ENCODE measurements at regions of chr3 and their contacts with region 1.

Region 1: DNA sequence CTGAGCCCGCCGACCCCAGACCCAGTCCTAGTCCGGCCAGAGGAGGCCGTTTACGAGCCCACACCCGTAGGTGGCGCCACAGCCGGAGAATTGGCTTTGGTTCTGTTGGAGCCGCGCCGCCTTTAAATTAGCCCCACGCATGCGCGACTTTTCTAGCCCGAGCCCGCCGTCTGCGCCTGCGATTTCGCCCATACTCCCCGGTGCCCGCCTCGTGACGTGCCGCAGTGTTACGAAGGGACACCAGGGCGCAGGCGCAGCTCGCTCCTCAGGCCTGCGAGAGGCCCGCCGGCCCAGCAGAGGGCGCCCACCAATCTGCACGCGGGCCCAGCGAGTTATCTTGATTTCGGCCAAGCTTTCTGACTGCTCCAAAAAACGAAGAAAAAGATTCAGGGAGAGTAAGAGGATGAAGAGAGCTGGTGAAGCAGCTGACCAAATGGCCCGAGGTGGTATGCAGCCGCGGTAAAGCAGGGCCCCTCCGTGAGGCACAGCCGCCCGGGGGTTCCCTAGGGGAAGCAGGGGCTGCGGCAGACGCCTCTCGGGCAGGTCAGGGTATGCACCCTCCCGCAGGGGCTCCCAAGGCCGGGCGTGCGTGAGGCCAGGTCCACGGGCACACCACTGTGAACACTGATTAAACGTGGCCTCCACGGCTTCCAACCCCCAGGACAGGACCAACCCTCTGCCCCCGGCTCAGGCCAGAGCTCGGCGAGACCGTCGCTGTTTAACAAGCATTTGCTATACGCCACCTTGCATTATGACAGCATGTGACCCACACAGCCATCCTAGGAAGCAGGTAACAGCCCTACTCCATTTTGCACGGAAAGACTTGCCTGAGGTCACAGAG is 32.8 kb downstream of the RPN1 start:
- DNase-seq: peak; percentile 99
- ATAC-seq: peak; percentile 93
- H3K4me3 Mint-ChIP-seq: peak overlapping the region; percentile 99
- H3K27ac Mint-ChIP-seq: peak overlapping the region; percentile 95
- H3K4me1 Mint-ChIP-seq: peaks cover 46% of the 10 kb centered on the region
- H3K27me3 Mint-ChIP-seq: no peaks in the 10 kb centered on the region

Region 2: DNA sequence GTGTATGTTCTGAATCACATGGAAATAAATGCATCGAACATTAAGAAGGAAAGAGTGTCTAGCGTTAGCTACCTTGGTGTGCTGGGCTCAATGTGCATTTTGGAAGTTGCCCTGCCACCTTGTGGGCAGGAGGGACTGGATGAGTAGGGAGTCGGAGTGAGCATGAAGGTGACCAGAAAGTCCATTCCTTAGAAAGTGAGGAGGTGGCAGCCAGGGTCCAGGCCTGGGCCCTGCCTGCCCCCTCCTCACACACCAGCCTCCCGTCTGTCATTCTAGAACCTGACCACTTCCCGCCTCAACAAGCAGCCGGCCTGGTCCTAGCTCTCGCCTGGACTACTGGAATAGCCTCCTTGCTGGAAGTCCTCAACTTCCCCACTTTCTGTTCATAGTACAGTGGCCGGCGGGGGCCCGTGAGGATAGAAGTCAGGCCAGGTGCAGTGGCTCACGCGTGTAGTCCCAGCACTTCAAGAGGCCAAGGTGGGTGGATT is 114.6 kb before region 1 on chr3:
- CTCF ChIA-PET with region 1: no interaction called
- DNase-seq: peak; percentile 30
- ATAC-seq: no peak
- H3K4me3 Mint-ChIP-seq: no peak overlapping the region
- H3K27ac Mint-ChIP-seq: no peak overlapping the region
- H3K4me1 Mint-ChIP-seq: no peaks in the 10 kb centered on the region
- H3K27me3 Mint-ChIP-seq: peaks cover 34% of the 10 kb centered on the region

Region 3: DNA sequence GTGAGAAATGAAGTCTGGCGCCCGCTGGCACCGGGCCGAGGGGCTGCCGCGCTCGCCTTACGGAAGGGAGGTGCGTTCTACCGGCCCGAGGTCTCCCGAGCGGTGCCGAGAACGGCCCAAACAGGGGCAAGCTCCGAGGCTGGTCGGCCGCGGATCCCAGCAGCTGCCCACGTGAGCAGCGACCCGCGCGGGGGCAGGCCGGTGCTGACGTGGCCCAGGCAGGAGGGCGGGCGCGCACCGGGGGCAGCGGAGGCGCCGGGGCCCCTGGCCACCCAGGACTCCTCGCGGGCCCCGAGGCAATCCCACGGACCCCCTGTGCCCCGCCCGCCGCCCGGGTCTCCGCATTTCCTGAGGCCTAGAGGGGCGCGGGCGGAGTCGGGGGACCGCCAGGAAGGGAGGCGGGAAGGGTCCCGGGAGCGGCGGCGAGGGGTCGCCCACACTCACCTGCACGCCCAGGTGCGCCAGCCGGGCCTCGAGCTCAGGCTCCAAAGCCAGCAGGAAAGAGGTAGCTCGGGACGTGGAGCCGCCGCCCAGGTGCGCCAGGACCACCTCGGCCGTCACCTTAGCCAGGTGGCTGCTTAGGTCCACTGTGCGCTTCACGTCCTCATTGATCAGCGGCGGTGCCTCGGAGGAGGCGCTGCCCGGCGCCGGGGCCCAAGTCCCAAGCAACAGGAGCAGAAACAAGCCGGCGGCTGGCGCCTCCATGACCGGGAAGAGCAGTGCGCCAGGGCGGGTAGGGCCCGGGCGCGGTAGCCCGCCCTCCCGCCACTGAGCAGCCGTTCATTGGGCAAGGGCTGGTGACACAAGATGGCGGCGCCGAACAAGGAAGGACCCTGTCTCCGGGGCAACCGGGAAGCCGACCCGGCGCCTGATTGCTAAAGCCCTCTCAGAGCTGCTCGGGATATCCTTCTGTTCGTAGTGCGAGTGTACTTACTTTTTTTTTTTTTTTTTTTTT is 32.6 kb after region 1 on chr3 and contains the start of gene RPN1:
- CTCF ChIA-PET with region 1: interaction called, 27 read pairs
- DNase-seq: peak; percentile 97
- ATAC-seq: peak; percentile 98
- H3K4me3 Mint-ChIP-seq: peak within 1 kb of the TSS; percentile 84
- H3K27ac Mint-ChIP-seq: peak within 1 kb of the TSS; percentile 85
- H3K4me1 Mint-ChIP-seq: peaks cover 47% of the 10 kb centered on the region
- H3K27me3 Mint-ChIP-seq: no peaks in the 10 kb centered on the region
- total RNA-seq, gene RPN1: 151 to 175 TPM

Region 4: GRCh38 chr3:128794770-128795649 is 177.2 kb after region 1 on chr3:
- CTCF ChIA-PET with region 1: interaction called, 13 read pairs
- DNase-seq: peak; percentile 80
- ATAC-seq: peak; percentile 89
- H3K4me3 Mint-ChIP-seq: no peak overlapping the region
- H3K27ac Mint-ChIP-seq: peak overlapping the region; percentile 74
- H3K4me1 Mint-ChIP-seq: peaks cover 69% of the 10 kb centered on the region
- H3K27me3 Mint-ChIP-seq: no peaks in the 10 kb centered on the region

Region 5: GRCh38 chr3:128845778-128846485 is 228.2 kb after region 1 on chr3:
- CTCF ChIA-PET with region 1: interaction called, 36 read pairs
- DNase-seq: peak; percentile 91
- ATAC-seq: peak; percentile 81
- H3K4me3 Mint-ChIP-seq: peak overlapping the region; percentile 59
- H3K27ac Mint-ChIP-seq: peak overlapping the region; percentile 80
- H3K4me1 Mint-ChIP-seq: peaks cover 13% of the 10 kb centered on the region
- H3K27me3 Mint-ChIP-seq: no peaks in the 10 kb centered on the region

Region 6: GRCh38 chr3:129183569-129184395 is 566.0 kb after region 1 on chr3 and contains the start of gene CNBP:
- CTCF ChIA-PET with region 1: no interaction called
- DNase-seq: peak; percentile 94
- ATAC-seq: peak; percentile 98
- H3K4me3 Mint-ChIP-seq: peak within 1 kb of the TSS; percentile 87
- H3K27ac Mint-ChIP-seq: peak within 1 kb of the TSS; percentile 95
- H3K4me1 Mint-ChIP-seq: peaks cover 42% of the 10 kb centered on the region
- H3K27me3 Mint-ChIP-seq: no peaks in the 10 kb centered on the region
- total RNA-seq, gene CNBP: 270 to 330 TPM

Measured in activated CD8-positive, alpha-beta memory T cell treated with anti-CD3 and anti-CD28 coated beads, Interleukin-2, amount 10 ng/mL, durations not matched to agents 7 days and 5 days (primary cell).